Aorta (tissue), 5 donors: ENCODE measurements at regions of chr19 and their contacts with region 1.

Region 1: GRCh38 chr19:32224371-32225244 is 120.8 kb upstream of the ZNF507 start:
- DNase-seq: peak; percentile 58 to 87
- ATAC-seq: peak; percentile 91
- H3K4me3 ChIP-seq: no peak overlapping the region
- H3K27ac ChIP-seq: no peak overlapping the region
- H3K4me1 ChIP-seq: no peaks in the 10 kb centered on the region
- H3K27me3 ChIP-seq: no peaks in the 10 kb centered on the region

Region 2: GRCh38 chr19:30669329-30670010 is 1555.1 kb before region 1 on chr19:
- intact Hi-C with region 1: loop called in 1 of 2 experiments (anchors 5 kb)
- DNase-seq: peak in 1 of 2 donors; percentile 88
- ATAC-seq: peak; percentile 42
- H3K4me3 ChIP-seq: no peak overlapping the region
- H3K27ac ChIP-seq: no peak overlapping the region
- H3K4me1 ChIP-seq: no peaks in the 10 kb centered on the region
- H3K27me3 ChIP-seq: no peaks in the 10 kb centered on the region

Region 3: GRCh38 chr19:30682999-30683536 is 1541.5 kb before region 1 on chr19:
- intact Hi-C with region 1: loop called (anchors 5 kb)
- DNase-seq: peak; percentile 71 to 91
- ATAC-seq: peak; percentile 87
- H3K4me3 ChIP-seq: no peak overlapping the region
- H3K27ac ChIP-seq: no peak overlapping the region
- H3K4me1 ChIP-seq: no peaks in the 10 kb centered on the region
- H3K27me3 ChIP-seq: no peaks in the 10 kb centered on the region

Region 4: DNA sequence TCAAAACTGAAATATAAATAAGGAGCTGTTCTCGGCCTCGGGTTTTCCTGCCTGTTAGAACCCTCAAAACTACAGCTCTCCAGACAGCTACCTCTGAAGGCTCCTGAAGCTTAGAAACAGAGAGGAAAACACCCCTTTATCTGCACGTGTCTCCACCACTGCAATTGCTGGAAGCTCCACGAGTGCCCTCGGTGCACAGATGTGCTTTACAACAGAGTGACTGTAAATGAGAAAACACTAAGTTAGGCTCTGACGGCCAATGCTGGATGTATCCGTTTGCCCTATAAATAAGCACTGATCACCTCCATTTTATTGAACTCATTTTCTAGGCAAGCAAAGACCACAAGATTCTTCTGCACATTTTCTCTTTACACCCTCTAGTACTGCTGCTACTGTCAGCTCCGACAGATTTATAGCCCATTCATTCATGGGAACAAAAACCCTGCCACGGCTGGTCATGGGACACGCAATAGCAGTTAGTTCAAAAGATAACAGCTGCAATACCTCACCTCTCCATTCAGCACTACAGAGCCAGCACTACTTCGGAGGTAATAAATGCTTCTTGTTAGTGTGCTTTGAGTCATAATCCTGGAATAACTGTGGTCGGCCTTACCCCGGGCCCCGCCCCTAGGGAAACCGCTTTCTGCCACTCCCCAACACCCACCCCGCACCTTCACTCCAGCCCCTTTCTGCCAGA is 120.3 kb before region 1 on chr19:
- intact Hi-C with region 1: no loop called
- DNase-seq: no peak
- ATAC-seq: no peak
- H3K4me3 ChIP-seq: no peak overlapping the region
- H3K27ac ChIP-seq: no peak overlapping the region
- H3K4me1 ChIP-seq: no peaks in the 10 kb centered on the region
- H3K27me3 ChIP-seq: peaks cover 0 to 2% of the 10 kb centered on the region in 2 donors